MCF 10A (cell line): ENCODE measurements at regions of chr3 and their contacts with region 1.

Region 1: GRCh38 chr3:124552239-124552638 is 178.0 kb upstream of the UMPS start:
- DNase-seq: peak; percentile 89
- H3K4me3 Mint-ChIP-seq: no peak overlapping the region
- H3K27ac Mint-ChIP-seq: no peak overlapping the region
- H3K4me1 Mint-ChIP-seq: peaks cover 8% of the 10 kb centered on the region
- H3K27me3 Mint-ChIP-seq: peaks cover 80% of the 10 kb centered on the region
- CTCF ChIP-seq: no peak

Region 2: GRCh38 chr3:124492811-124493210 is 59.4 kb before region 1 on chr3:
- CTCF ChIA-PET with region 1: interaction called, 76 read pairs
- POLR2A ChIA-PET with region 1: no interaction called
- intact Hi-C with region 1: loop called (anchors 1 kb)
- DNase-seq: peak; percentile 83
- H3K4me3 Mint-ChIP-seq: no peak overlapping the region
- H3K27ac Mint-ChIP-seq: no peak overlapping the region
- H3K4me1 Mint-ChIP-seq: peaks cover 5% of the 10 kb centered on the region
- H3K27me3 Mint-ChIP-seq: peaks cover 20% of the 10 kb centered on the region
- CTCF ChIP-seq: peak; percentile 67

Region 3: GRCh38 chr3:124504332-124505059 is 47.7 kb before region 1 on chr3:
- CTCF ChIA-PET with region 1: interaction called, 51 read pairs
- POLR2A ChIA-PET with region 1: no interaction called
- intact Hi-C with region 1: no loop called
- DNase-seq: peak; percentile 48
- H3K4me3 Mint-ChIP-seq: no peak overlapping the region
- H3K27ac Mint-ChIP-seq: no peak overlapping the region
- H3K4me1 Mint-ChIP-seq: peaks cover 4% of the 10 kb centered on the region
- H3K27me3 Mint-ChIP-seq: peaks cover 32% of the 10 kb centered on the region
- CTCF ChIP-seq: no peak

Region 4: GRCh38 chr3:124514683-124515082 is 37.6 kb before region 1 on chr3:
- CTCF ChIA-PET with region 1: interaction called, 19 read pairs
- POLR2A ChIA-PET with region 1: no interaction called
- intact Hi-C with region 1: no loop called
- DNase-seq: no peak
- H3K4me3 Mint-ChIP-seq: no peak overlapping the region
- H3K27ac Mint-ChIP-seq: no peak overlapping the region
- H3K4me1 Mint-ChIP-seq: peaks cover 13% of the 10 kb centered on the region
- H3K27me3 Mint-ChIP-seq: peaks cover 29% of the 10 kb centered on the region
- CTCF ChIP-seq: no peak

Region 5: GRCh38 chr3:124540550-124541211 is 11.6 kb before region 1 on chr3:
- CTCF ChIA-PET with region 1: interaction called, 20 read pairs
- POLR2A ChIA-PET with region 1: interaction called, 4 read pairs
- intact Hi-C with region 1: no loop called
- DNase-seq: no peak
- H3K4me3 Mint-ChIP-seq: no peak overlapping the region
- H3K27ac Mint-ChIP-seq: no peak overlapping the region
- H3K4me1 Mint-ChIP-seq: no peaks in the 10 kb centered on the region
- H3K27me3 Mint-ChIP-seq: peaks cover 34% of the 10 kb centered on the region
- CTCF ChIP-seq: no peak